Endothelial cell of umbilical vein (primary cell): ENCODE measurements at regions of chrX and their contacts with region 1.

Region 1: GRCh38 chrX:119004920-119005524 is 30.6 kb downstream of the LONRF3 start:
- DNase-seq: peak; percentile 47
- H3K4me3 ChIP-seq: no peak overlapping the region
- H3K27ac ChIP-seq: no peak overlapping the region
- H3K4me1 ChIP-seq: peaks cover 14% of the 10 kb centered on the region
- H3K27me3 ChIP-seq: no peaks in the 10 kb centered on the region
- CTCF ChIP-seq: peak; percentile 74 to 81
- POLR2A ChIP-seq: no peak

Region 2: DNA sequence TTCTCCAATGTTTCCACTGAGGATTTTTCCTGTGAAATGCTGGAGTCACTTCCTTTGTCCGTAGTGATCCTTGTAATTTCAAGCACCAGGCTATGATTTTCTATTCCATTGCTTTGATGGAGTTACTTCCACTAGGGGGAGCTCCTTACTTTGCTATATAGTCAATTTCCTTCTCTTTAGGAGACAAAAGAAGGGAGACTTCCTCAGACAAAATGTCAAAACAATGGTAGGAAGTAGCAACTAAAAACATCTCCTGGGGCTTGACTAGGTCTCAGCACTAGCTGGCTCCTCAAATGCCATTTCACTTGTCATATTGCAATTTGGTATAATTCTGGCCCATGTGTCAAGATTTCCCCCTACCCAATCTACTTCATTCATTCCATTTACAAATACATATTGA is 157.3 kb before region 1 on chrX:
- CTCF ChIA-PET with region 1: interaction called, 11 read pairs
- POLR2A ChIA-PET with region 1: no interaction called
- dilution Hi-C with region 1: no loop called
- intact Hi-C with region 1: loop called (anchors 1 kb)
- DNase-seq: peak; percentile 70
- H3K4me3 ChIP-seq: no peak overlapping the region
- H3K27ac ChIP-seq: no peak overlapping the region
- H3K4me1 ChIP-seq: peaks cover 3% of the 10 kb centered on the region
- H3K27me3 ChIP-seq: no peaks in the 10 kb centered on the region
- CTCF ChIP-seq: peak; percentile 19 to 38
- POLR2A ChIP-seq: no peak

Region 3: DNA sequence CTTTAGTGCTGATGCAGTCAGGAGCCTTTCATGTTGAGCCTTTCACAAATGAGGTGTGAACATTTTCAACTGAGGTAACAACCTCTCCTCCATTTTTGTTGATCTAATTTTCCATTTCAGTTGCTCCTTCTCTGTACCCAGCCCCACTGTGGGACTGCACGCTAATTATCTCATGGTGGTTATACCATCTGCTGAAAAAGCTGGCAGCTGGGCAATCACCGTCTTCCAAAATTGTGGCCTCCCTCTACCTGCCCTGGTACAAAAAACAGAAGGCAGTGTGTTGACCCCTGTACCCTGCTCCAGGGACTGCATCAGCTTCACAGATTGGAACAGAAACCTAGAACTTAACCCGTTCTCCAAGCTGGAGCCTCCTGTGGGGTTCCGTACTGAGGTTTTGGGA is 103.0 kb before region 1 on chrX:
- CTCF ChIA-PET with region 1: no interaction called
- POLR2A ChIA-PET with region 1: no interaction called
- dilution Hi-C with region 1: no loop called
- intact Hi-C with region 1: no loop called
- DNase-seq: no peak
- H3K4me3 ChIP-seq: no peak overlapping the region
- H3K27ac ChIP-seq: no peak overlapping the region
- H3K4me1 ChIP-seq: no peaks in the 10 kb centered on the region
- H3K27me3 ChIP-seq: no peaks in the 10 kb centered on the region
- CTCF ChIP-seq: no peak
- POLR2A ChIP-seq: no peak

Region 4: DNA sequence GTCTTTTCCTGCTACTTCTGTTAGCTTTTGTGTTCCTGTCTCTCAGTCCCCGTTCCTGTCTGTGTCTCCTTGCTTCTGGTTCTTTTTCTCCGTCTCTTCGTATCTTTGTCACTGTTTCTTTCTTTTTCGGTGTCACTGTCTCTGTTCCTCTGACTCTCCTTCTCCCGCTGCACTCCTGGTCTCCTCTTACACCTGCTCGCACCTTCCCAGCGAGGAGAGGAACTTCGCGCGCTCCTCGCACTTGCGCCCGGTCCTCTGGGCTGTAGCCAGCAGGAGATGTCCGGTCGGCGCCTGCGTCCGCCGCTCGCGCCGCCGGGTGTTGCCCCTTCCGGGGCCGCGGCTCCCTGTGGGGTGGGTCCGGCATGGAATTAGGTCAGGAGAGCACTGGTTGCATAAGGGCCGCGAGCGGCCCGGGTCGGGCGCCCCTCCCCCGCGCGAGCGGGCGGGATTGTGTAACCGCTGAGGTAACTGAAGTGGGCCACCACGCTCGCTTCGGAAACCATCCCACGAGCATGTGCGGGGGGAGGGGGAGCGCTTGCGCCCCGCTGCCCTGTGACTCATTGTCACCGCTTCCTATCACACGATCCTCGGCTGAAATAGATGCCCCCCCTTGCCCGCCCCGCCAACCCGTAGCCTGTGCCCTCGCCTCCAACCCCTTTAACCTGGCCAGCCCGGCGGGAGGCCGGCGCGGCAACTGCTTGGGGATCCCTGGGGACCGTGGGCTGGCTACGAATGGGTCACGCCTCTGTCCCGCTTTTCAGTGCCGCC is 29.0 kb before region 1 on chrX:
- CTCF ChIA-PET with region 1: interaction called, 4 read pairs
- POLR2A ChIA-PET with region 1: no interaction called
- dilution Hi-C with region 1: no loop called
- intact Hi-C with region 1: loop called (anchors 2 kb)
- DNase-seq: peak; percentile 63
- H3K4me3 ChIP-seq: peak overlapping the region; percentile 68 to 91 (median 72)
- H3K27ac ChIP-seq: peak overlapping the region; percentile 60
- H3K4me1 ChIP-seq: peaks cover 17% of the 10 kb centered on the region
- H3K27me3 ChIP-seq: peaks cover 17 to 22% of the 10 kb centered on the region in 2 experiments
- CTCF ChIP-seq: no peak
- POLR2A ChIP-seq: no peak

Region 5: GRCh38 chrX:119015407-119016237 is 10.6 kb after region 1 on chrX:
- CTCF ChIA-PET with region 1: interaction called, 9 read pairs
- POLR2A ChIA-PET with region 1: no interaction called
- dilution Hi-C with region 1: no loop called
- intact Hi-C with region 1: loop called (anchors 1 kb)
- DNase-seq: peak; percentile 90
- H3K4me3 ChIP-seq: no peak overlapping the region
- H3K27ac ChIP-seq: peak overlapping the region; percentile 92
- H3K4me1 ChIP-seq: peaks cover 18% of the 10 kb centered on the region
- H3K27me3 ChIP-seq: no peaks in the 10 kb centered on the region
- CTCF ChIP-seq: no peak
- POLR2A ChIP-seq: no peak

Region 6: GRCh38 chrX:119067023-119067739 is 62.2 kb after region 1 on chrX:
- CTCF ChIA-PET with region 1: interaction called, 37 read pairs
- POLR2A ChIA-PET with region 1: no interaction called
- dilution Hi-C with region 1: no loop called
- intact Hi-C with region 1: loop called (anchors 1 kb)
- DNase-seq: peak; percentile 64
- H3K4me3 ChIP-seq: no peak overlapping the region
- H3K27ac ChIP-seq: no peak overlapping the region
- H3K4me1 ChIP-seq: no peaks in the 10 kb centered on the region
- H3K27me3 ChIP-seq: peaks cover 0 to 2% of the 10 kb centered on the region in 2 experiments
- CTCF ChIP-seq: peak; percentile 53 to 57
- POLR2A ChIP-seq: no peak

Region 7: GRCh38 chrX:119235872-119236622 is 231.0 kb after region 1 on chrX and contains the start of gene PGRMC1:
- CTCF ChIA-PET with region 1: no interaction called
- POLR2A ChIA-PET with region 1: no interaction called
- dilution Hi-C with region 1: no loop called
- intact Hi-C with region 1: loop called (anchors 5 kb)
- DNase-seq: peak; percentile 80
- H3K4me3 ChIP-seq: peak within 1 kb of the TSS; percentile 68 to 83 (median 69)
- H3K27ac ChIP-seq: peak within 1 kb of the TSS; percentile 62
- H3K4me1 ChIP-seq: peaks cover 5% of the 10 kb centered on the region
- H3K27me3 ChIP-seq: peaks cover 6 to 9% of the 10 kb centered on the region in 2 experiments
- CTCF ChIP-seq: no peak
- POLR2A ChIP-seq: peak; percentile 74
- total RNA-seq, gene PGRMC1: 59.2 and 61.8 TPM in 2 replicates